ENCODE measurements at regions of chr13 and their contacts with region 1.

Region 1: GRCh38 chr13:108575430-108575829 is 54.0 kb upstream of the MYO16 start:
- H3K4me3 Mint-ChIP-seq: no peak overlapping the region
- H3K27ac Mint-ChIP-seq: no peak overlapping the region
- H3K4me1 Mint-ChIP-seq: no peaks in the 10 kb centered on the region
- H3K27me3 Mint-ChIP-seq: no peaks in the 10 kb centered on the region

Region 2: GRCh38 chr13:108427355-108427754 is 148.1 kb before region 1 on chr13:
- intact Hi-C with region 1: no loop called
- H3K4me3 Mint-ChIP-seq: no peak overlapping the region
- H3K27ac Mint-ChIP-seq: no peak overlapping the region
- H3K4me1 Mint-ChIP-seq: no peaks in the 10 kb centered on the region
- H3K27me3 Mint-ChIP-seq: no peaks in the 10 kb centered on the region

Region 3: GRCh38 chr13:108533842-108534241 is 41.6 kb before region 1 on chr13:
- intact Hi-C with region 1: no loop called
- H3K4me3 Mint-ChIP-seq: no peak overlapping the region
- H3K27ac Mint-ChIP-seq: no peak overlapping the region
- H3K4me1 Mint-ChIP-seq: no peaks in the 10 kb centered on the region
- H3K27me3 Mint-ChIP-seq: no peaks in the 10 kb centered on the region

Region 4: GRCh38 chr13:108629181-108629752 is 53.8 kb after region 1 on chr13 and contains the start of gene MYO16:
- intact Hi-C with region 1: loop called (anchors 2 kb)
- H3K4me3 Mint-ChIP-seq: no peak within 1 kb of the TSS
- H3K27ac Mint-ChIP-seq: no peak within 1 kb of the TSS
- H3K4me1 Mint-ChIP-seq: no peaks in the 10 kb centered on the region
- H3K27me3 Mint-ChIP-seq: no peaks in the 10 kb centered on the region